Activated naive CD4-positive, alpha-beta T cell treated with anti-CD3 and anti-CD28 coated beads for 36 hours (primary cell): ENCODE measurements at regions of chr18 and their contacts with region 1.

Region 1: DNA sequence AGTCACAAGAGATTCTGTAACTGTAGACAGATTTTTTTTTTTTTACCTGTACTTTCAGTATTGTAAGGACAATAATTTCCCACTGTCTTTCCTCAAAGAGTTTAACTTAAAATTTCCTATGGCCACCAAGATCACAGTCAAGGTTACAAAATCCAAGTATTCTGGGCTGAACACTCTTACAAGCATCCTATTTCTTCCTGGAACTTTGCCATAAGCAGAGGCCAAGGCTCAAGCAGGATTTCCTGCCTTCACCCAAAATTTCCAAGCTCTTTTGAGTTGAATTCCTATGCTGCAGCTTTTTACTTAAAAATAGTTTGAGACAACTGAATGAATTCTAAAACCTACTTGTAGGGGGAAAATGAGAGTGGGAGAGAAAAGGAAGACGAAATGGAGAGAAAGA is 299.4 kb downstream of the ZNF516 start:
- DNase-seq: no peak
- H3K4me3 Mint-ChIP-seq: no peak overlapping the region
- H3K27ac Mint-ChIP-seq: no peak overlapping the region
- H3K4me1 Mint-ChIP-seq: no peaks in the 10 kb centered on the region
- H3K27me3 Mint-ChIP-seq: peaks cover 16% of the 10 kb centered on the region

Region 2: GRCh38 chr18:75869162-75869561 is 326.4 kb before region 1 on chr18:
- CTCF ChIA-PET with region 1: no interaction called
- intact Hi-C with region 1: no loop called
- DNase-seq: no peak
- H3K4me3 Mint-ChIP-seq: no peak overlapping the region
- H3K27ac Mint-ChIP-seq: no peak overlapping the region
- H3K4me1 Mint-ChIP-seq: no peaks in the 10 kb centered on the region
- H3K27me3 Mint-ChIP-seq: peaks cover 8% of the 10 kb centered on the region

Region 3: DNA sequence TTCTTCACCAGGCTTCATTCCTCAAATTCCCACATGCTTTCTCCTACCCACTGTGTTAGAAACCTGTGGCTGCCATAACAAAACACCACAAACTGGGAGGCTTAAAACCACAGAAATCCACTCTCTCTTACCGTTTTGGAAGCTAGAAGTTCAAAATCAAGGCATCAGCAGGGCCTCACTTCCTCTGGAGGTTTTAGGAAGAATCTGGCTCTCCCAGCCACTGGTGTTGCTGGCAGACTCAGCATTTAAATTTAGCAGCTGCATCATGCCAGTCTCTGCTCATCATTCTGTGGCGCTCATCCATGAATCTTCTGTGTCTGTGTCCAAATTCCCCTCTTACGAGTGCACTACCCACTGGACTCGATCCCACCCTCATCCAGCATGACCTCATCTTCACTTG is 51.0 kb after region 1 on chr18:
- CTCF ChIA-PET with region 1: no interaction called
- intact Hi-C with region 1: loop called (anchors 2 kb)
- DNase-seq: no peak
- H3K4me3 Mint-ChIP-seq: no peak overlapping the region
- H3K27ac Mint-ChIP-seq: no peak overlapping the region
- H3K4me1 Mint-ChIP-seq: no peaks in the 10 kb centered on the region
- H3K27me3 Mint-ChIP-seq: no peaks in the 10 kb centered on the region